Posterior cingulate gyrus (tissue), 11 donors: ENCODE measurements at regions of chr6 and their contacts with region 1.

Region 1: GRCh38 chr6:152948150-152948768 is 34.6 kb downstream of the FBXO5 start:
- DNase-seq: no peak

Region 2: DNA sequence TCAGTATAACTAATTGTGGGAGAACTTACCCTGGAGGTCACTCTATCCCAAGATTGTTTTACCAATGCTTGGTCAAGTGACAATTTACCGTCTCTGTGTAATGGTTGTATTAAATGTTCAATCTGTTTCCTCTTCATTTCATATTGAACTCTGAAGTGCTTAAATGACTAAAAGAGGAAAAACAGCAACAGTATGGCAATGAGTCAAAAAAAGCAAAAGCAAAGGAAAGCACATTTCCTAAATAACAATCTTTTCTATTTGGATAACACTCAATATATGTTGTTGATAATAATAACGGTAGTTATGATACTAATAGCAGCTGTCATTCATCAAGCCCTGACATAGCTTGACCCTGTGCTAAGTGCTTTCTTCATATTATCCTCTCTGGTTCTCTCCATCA is 463.5 kb before region 1 on chr6:
- intact Hi-C with region 1: loop called (anchors 10 kb)
- DNase-seq: no peak

Region 3: GRCh38 chr6:152748843-152749242 is 199.4 kb before region 1 on chr6:
- intact Hi-C with region 1: loop called (anchors 1 kb)
- DNase-seq: no peak

Region 4: GRCh38 chr6:152863618-152864326 is 84.5 kb before region 1 on chr6:
- intact Hi-C with region 1: loop called (anchors 1 kb)
- DNase-seq: peak in 6 of 10 donors; percentile 41 to 72 (median 58)

Region 5: GRCh38 chr6:152932865-152933264 is 15.4 kb before region 1 on chr6:
- intact Hi-C with region 1: no loop called
- DNase-seq: no peak

Region 6: GRCh38 chr6:152982768-152983636 is 34.7 kb after region 1 on chr6 and contains the start of gene FBXO5:
- intact Hi-C with region 1: no loop called
- DNase-seq: peak; percentile 90 to 100 (median 96)